Ascending aorta (tissue), 2 donors: ENCODE measurements at regions of chr9 and their contacts with region 1.

Region 1: DNA sequence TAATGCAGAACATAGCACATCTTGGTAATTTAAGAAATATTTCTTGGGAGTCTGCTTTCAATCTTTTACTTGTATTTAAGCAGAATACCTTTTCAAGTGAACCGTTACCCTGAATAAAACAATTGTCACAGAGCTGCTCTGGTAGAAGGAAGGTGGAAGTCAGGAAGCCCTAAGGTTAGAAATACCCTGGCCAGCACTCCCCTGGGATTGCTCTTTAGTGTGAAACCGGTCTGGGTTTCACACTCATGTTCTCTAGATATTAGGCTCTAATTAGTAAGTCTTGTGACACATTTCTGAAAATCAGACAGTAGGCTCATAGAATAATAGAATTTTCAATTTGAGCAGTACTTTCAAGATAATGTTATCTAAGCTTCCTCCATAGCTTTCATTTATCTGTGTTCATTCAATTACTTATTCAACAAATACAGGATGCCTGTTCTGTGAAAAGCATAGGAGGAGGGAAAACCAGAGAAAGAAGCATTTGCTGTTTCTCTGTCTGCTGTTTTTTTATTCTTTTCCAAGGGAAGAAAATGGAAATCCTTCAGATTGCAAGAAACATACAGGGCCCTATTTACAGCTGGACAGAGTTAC is 825.5 kb downstream of the TLR4 start:
- DNase-seq: no peak
- H3K4me3 ChIP-seq: no peak overlapping the region
- H3K27ac ChIP-seq: peak overlapping the region; percentile 5 to 23
- H3K4me1 ChIP-seq: peaks cover 0 to 9% of the 10 kb centered on the region in 2 donors
- H3K27me3 ChIP-seq: no peaks in the 10 kb centered on the region
- CTCF ChIP-seq: no peak

Region 2: DNA sequence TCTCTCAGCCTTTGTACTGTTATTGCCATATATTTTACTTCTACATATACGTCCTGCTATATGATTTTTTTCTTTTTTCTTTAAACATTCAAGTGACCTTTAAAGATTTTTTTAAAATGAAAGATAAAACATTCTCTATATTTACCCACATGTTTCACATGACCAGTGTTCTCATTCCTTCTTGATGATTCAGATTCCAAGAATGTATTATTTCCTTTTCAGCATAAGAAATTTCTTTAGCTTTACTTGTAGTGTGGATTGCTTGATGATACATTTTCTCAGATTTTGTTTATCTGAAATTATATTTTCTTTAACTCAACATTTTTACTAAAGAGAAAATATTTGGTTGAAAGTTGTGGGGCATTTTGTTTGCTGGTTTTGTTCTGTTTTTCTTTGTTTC is 47.4 kb after region 1 on chr9:
- intact Hi-C with region 1: loop called (anchors 5 kb)
- DNase-seq: no peak
- H3K4me3 ChIP-seq: no peak overlapping the region
- H3K27ac ChIP-seq: peak overlapping the region; percentile 54 to 57
- H3K4me1 ChIP-seq: peaks cover 0 to 9% of the 10 kb centered on the region in 2 donors
- H3K27me3 ChIP-seq: no peaks in the 10 kb centered on the region
- CTCF ChIP-seq: no peak